Caco-2 (cell line): ENCODE measurements at regions of chr6 and their contacts with region 1.

Region 1: GRCh38 chr6:112780498-112781096 is 433.5 kb downstream of the RFPL4B start:
- DNase-seq: peak; percentile 62 to 74
- H3K4me3 ChIP-seq: no peak overlapping the region
- H3K4me3 Mint-ChIP-seq: no peak overlapping the region
- H3K27ac Mint-ChIP-seq: no peak overlapping the region
- H3K4me1 ChIP-seq: no peaks in the 10 kb centered on the region
- H3K4me1 Mint-ChIP-seq: no peaks in the 10 kb centered on the region
- H3K27me3 ChIP-seq: no peaks in the 10 kb centered on the region
- H3K27me3 Mint-ChIP-seq: peaks cover 5% of the 10 kb centered on the region
- CTCF ChIP-seq: peak; percentile 74 to 84

Region 2: GRCh38 chr6:112879920-112880413 is 99.4 kb after region 1 on chr6:
- CTCF ChIA-PET with region 1: no interaction called
- POLR2A ChIA-PET with region 1: no interaction called
- intact Hi-C with region 1: loop called (anchors 10 kb)
- DNase-seq: peak; percentile 76 to 80
- H3K4me3 ChIP-seq: peak overlapping the region; percentile 56
- H3K4me3 Mint-ChIP-seq: peak overlapping the region; percentile 64
- H3K27ac Mint-ChIP-seq: no peak overlapping the region
- H3K4me1 ChIP-seq: peaks cover 5% of the 10 kb centered on the region; the same call in 1 of the 2 replicates
- H3K4me1 Mint-ChIP-seq: no peaks in the 10 kb centered on the region
- H3K27me3 ChIP-seq: no peaks in the 10 kb centered on the region
- H3K27me3 Mint-ChIP-seq: no peaks in the 10 kb centered on the region
- CTCF ChIP-seq: peak; percentile 55 to 69

Region 3: GRCh38 chr6:113909234-113909856 is 1128.7 kb after region 1 on chr6:
- CTCF ChIA-PET with region 1: no interaction called
- POLR2A ChIA-PET with region 1: no interaction called
- intact Hi-C with region 1: loop called (anchors 1 kb)
- DNase-seq: peak in 1 of 2 experiments; percentile 57
- H3K4me3 ChIP-seq: no peak overlapping the region
- H3K4me3 Mint-ChIP-seq: no peak overlapping the region
- H3K27ac Mint-ChIP-seq: no peak overlapping the region
- H3K4me1 ChIP-seq: peaks cover 5% of the 10 kb centered on the region; the same call in 1 of the 2 replicates
- H3K4me1 Mint-ChIP-seq: peaks cover 8% of the 10 kb centered on the region
- H3K27me3 ChIP-seq: no peaks in the 10 kb centered on the region
- H3K27me3 Mint-ChIP-seq: no peaks in the 10 kb centered on the region
- CTCF ChIP-seq: peak; percentile 38 to 73

Region 4: GRCh38 chr6:113936093-113936934 is 1155.7 kb after region 1 on chr6:
- CTCF ChIA-PET with region 1: no interaction called
- POLR2A ChIA-PET with region 1: no interaction called
- intact Hi-C with region 1: loop called (anchors 1 kb)
- DNase-seq: peak in 1 of 2 experiments; percentile 48
- H3K4me3 ChIP-seq: no peak overlapping the region
- H3K4me3 Mint-ChIP-seq: no peak overlapping the region
- H3K27ac Mint-ChIP-seq: no peak overlapping the region
- H3K4me1 ChIP-seq: no peaks in the 10 kb centered on the region
- H3K4me1 Mint-ChIP-seq: no peaks in the 10 kb centered on the region
- H3K27me3 ChIP-seq: no peaks in the 10 kb centered on the region
- H3K27me3 Mint-ChIP-seq: no peaks in the 10 kb centered on the region
- CTCF ChIP-seq: peak; percentile 66 to 69